Activated CD4-positive, alpha-beta T cell treated with anti-CD3 and anti-CD28 coated beads for 36 hours (primary cell): ENCODE measurements at regions of chr16 and their contacts with region 1.

Region 1: DNA sequence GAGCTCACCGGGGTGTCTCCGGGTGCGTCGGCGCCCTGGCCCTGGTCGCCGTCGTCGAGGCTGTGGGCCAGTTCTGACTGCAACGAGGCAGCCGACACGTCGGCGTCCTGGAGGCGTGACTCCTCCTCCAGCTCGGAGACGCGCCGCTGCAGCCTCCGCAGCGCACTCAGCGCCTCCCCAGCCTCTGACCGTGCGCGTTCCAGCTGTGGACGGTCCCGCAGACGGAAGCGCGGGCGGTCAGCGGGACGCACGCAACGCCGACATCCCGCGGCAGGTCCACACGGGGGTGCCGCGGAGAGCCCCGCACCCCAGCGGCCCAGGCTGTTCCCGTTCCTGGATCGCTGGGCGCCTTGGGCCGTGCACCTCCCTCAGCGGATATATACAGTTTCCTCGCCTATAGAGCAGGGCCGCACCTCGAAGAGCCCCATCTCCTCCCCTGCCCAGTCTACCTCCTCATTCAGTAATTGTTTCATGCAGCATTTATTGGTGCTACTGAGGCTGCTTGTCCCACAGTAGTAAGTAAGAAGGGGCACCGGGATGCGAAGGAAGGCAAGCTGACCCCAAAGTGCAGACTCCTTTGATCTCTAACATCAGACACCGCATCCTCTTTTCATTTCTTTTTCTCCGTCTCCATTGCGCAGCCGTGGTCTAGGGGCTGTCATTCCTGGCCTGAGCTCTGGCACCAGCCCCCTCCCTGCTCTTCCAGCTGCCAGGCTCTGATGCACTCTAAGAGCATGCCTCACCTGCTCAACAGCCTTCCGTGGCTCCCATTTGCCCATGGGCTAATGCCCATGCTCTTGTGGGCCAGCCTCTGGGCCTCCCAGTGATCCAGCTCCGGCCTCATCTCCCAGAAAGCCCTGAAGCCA is 5.9 kb downstream of the THOC6 start:
- DNase-seq: peak; percentile 85
- ATAC-seq: peak; percentile 69
- H3K4me3 Mint-ChIP-seq: peak overlapping the region; percentile 67
- H3K27ac Mint-ChIP-seq: peak overlapping the region; percentile 65
- H3K4me1 Mint-ChIP-seq: peaks cover 23% of the 10 kb centered on the region
- H3K27me3 Mint-ChIP-seq: peaks cover 38% of the 10 kb centered on the region

Region 2: GRCh38 chr16:3045357-3045728 is 15.6 kb after region 1 on chr16:
- CTCF ChIA-PET with region 1: interaction called, 61 read pairs
- POLR2A ChIA-PET with region 1: interaction called, 3 read pairs
- intact Hi-C with region 1: no loop called
- DNase-seq: peak; percentile 64
- ATAC-seq: peak; percentile 59
- H3K4me3 Mint-ChIP-seq: peak overlapping the region; percentile 63
- H3K27ac Mint-ChIP-seq: no peak overlapping the region
- H3K4me1 Mint-ChIP-seq: peaks cover 14% of the 10 kb centered on the region
- H3K27me3 Mint-ChIP-seq: peaks cover 43% of the 10 kb centered on the region

Region 3: GRCh38 chr16:3065069-3065741 is 35.4 kb after region 1 on chr16 and contains the start of gene IL32:
- CTCF ChIA-PET with region 1: interaction called, 18 read pairs
- POLR2A ChIA-PET with region 1: interaction called, 4 read pairs
- intact Hi-C with region 1: no loop called
- DNase-seq: peak; percentile 90
- ATAC-seq: peak; percentile 62
- H3K4me3 Mint-ChIP-seq: peak within 1 kb of the TSS; percentile 100
- H3K27ac Mint-ChIP-seq: peak within 1 kb of the TSS; percentile 100
- H3K4me1 Mint-ChIP-seq: peaks cover 64% of the 10 kb centered on the region
- H3K27me3 Mint-ChIP-seq: no peaks in the 10 kb centered on the region
- total RNA-seq, gene IL32: 1,864 to 2,360 TPM

Region 4: DNA sequence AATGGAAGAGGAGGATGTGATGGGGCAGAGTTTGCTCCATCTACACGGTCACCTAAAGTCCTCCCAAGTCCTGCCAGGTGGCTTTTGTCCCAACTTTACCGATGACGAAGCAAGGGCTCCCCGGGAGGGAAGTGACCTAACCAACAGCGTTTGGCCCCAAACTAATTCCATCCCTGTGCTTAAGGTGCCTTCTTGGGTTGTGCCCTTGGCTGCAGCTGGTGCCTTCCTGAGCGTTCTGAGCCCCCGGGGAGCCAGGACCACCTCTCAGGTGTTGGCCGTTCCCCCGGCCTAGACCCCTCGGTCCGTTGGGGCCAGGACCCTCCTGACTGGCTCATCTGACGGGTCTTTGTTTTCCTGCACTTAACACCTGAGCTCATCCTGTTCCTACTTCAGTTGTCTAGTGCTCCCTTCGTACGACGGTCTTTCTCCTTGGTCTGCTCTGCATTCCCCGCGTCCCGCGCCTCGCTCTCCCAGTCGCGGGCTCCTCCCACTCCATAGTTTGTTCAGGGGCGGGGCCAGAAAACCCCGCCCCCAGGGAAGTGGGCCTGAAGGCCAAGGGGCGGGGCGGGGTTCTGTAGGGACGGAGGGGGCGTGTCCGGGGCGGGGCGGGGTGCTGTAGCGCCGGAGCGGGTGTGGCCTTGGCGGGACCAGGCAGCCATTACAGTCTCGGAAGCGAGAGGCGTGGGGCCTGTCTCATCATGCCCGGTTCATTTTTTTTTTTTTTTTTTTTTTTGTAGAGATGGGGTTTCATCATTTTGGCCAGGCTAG is 70.1 kb after region 1 on chr16:
- CTCF ChIA-PET with region 1: interaction called, 4 read pairs
- POLR2A ChIA-PET with region 1: no interaction called
- intact Hi-C with region 1: loop called in 1 of 2 experiments (anchors 1 kb)
- DNase-seq: peak; percentile 99
- ATAC-seq: peak; percentile 84
- H3K4me3 Mint-ChIP-seq: peak overlapping the region; percentile 68
- H3K27ac Mint-ChIP-seq: peak overlapping the region; percentile 84
- H3K4me1 Mint-ChIP-seq: peaks cover 49% of the 10 kb centered on the region
- H3K27me3 Mint-ChIP-seq: no peaks in the 10 kb centered on the region